ENCODE measurements at regions of chr22 and their contacts with region 1.

Region 1: GRCh38 chr22:37681556-37682049 is 4.5 kb upstream of the NOL12 start:
- DNase-seq: peak in 41 of 42 donors; percentile 52 to 87 (median 70)

Region 2: DNA sequence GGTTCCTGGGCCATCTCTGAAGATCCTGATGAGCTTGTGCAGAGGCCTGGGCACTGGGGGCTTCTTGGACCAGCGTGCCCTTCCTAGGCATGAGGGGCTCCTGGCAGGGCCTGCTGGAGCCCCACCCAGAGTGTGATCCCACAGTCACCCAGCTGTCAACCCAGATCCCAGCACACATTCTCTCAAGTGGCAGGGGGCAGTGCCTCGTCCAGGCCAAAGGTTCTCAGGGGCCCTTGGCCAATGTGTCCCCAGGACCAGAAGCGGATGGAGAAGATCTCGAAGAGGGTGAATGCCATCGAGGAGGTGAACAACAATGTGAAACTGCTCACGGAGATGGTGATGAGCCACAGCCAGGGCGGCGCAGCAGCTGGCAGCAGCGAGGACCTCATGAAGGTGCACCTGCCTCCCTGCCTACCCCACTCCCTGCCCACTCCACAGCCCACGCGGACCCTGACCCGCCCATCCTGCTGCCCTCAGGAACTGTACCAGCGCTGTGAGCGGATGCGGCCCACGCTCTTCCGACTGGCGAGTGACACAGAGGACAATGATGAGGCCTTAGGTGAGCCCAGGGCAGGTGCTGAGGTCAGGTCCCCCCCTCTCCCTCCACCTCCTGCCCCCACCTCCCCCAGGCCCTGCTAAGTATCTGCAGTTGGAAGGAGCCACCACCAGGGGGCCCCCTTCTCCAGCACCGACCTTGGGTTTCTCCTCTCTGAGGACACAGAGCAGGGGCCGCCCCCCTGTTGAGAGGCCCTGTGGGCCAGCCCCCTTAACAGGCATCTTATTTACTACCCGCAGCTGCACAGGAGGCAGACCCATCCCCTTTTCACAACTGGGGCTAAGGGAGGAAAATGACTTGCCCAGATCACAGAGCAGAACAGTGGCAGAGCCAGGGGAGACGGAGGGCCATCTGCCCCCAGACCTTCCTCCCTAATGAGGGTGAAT is 58.3 kb before region 1 on chr22:
- intact Hi-C with region 1: no loop called
- DNase-seq: peak; percentile 40 to 86 (median 67)

Region 3: GRCh38 chr22:37643225-37643847 is 38.3 kb before region 1 on chr22:
- intact Hi-C with region 1: loop called (anchors 5 kb)
- DNase-seq: peak; percentile 51 to 95 (median 88)

Region 4: DNA sequence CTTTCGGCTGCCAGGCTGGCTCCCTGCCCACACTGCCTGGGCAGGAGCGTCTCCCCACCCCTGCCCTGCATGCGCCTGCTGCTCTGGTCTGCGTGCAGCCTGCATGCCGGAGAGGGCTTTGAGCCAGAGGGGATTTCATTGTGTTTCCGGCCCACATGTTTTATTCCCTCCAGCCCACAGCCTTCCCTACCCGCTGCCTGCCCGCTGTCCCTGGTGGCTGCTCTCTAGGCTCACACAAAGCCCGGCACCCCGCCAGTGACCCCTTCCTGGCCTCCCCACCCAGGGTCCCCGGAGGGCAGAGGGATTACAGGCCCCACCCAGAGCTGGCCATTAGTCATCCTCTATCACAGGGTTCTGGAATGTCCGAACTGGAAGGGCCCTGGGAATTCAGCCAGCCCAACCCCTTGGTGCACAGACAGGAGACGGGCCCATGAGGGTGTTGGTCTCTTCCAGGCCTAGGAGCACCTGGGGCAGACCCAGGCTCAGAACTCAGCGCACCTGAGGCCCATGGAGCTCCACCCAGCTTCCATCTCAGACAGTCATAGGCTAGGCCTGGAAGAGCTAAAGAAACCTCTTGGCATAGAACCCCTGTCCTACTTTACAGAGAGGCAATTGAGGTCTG is 71.0 kb after region 1 on chr22:
- intact Hi-C with region 1: no loop called
- DNase-seq: peak in 33 of 42 donors; percentile 16 to 66 (median 41)